ENCODE measurements at regions of chr12 and their contacts with region 1.

Region 1: DNA sequence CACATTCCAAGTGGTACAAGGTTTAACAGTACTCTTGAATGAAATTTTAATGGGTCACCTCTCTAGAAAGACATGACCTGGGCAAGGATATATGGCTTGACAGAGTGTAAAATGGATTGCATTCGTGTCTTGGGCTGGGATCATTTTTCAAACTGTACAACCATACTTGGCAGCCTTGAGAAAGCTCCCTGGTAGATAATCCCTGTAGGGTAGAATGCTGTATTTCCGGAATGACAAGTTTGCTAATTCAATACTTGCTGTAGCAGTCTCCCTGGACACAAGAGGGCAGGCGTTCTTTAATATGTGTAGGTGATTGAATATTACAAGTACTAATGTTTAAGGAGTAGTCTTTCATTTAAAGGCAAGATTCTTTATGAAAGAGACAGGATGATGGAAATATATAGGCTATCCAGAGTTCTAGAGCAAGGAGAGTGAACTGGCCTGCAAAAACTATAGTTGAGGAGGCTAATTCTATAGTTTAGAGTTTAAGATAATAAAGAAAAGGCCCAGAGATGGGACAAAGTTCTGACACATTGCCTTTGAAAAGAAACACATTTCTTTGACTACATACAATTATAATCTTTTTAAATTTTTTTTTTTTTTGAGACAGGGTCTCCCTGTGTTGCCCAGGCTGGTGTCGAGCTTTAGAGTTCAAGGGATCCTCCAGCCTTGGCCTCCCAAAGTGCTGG is 53.4 kb downstream of the PLBD1 start:
- DNase-seq: peak; percentile 75

Region 2: DNA sequence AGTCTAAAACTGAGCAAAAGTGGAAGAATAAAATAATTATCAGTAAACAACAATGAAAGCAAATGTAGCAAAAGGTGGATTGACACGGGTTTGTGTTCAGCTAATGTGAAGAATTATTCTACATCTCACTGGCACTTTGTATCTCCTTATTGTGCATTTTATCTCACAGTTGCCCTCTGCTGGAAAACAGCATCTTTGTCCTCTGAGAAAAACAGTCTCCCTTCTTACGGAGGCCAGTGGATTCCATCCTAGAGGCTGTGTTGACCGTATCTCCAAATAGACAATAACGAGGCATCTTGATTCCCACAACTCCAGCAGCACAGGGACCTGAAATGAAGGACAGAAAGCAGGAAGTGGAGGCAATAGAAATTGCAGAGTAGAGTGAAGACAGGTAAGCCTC is 104.7 kb after region 1 on chr12:
- in situ Hi-C with region 1: loop called (anchors 25 kb)
- DNase-seq: peak; percentile 65

Region 3: DNA sequence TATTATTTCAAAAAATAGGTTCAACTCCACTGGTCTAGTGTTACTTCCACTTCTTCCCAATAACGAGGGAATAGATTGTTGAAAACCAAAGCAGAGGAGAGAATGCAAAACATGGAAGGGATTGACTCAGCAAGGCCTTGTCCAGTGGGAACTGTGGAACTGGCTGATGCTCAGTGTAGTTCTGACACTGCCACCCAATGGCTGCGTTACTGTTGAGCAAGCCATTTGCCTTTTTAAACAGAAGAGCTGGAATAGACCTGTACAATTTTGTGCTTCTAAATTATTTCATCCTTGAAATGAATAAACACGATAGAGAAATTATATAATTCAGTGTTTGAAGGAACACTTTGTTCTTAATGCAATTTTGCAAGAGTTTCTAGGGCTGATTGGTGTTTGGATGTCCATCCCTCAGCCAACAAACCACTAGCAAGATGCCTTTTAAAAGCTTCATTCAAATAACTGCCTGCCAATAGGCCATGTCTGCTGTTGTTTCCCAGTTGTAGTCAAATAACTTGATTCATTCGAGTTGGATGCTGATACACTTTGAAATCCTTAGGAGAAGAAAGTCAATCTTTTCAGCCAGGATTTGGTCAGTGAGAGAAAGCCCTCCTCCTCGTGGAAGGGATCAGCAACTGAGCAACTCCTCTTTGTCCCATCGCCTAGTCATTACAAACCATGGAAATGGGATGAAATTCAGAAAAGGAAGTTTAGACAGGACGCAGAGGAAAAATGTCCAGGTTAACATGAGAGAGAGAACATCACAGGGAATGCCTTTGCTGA is 378.6 kb after region 1 on chr12:
- in situ Hi-C with region 1: no loop called
- DNase-seq: peak; percentile 84

Region 4: DNA sequence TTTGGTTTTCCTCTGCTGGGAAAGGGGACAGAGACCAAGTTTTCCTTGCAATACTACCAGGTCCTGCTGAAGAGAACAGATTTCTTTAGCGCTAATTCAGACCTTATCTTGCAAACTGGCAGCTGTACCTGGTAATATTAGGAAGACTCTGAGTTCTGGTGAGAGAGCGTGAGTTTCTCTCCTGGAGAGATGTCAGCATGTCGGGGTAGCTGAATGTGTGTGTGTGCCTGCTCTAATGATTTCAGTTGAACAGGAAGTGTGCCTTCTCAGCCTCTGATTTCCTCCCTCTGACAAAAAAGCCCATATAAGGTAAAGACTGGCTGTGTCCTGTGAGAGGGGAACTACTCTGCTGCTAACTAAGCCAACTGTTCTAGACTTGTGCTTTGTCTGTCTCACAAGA is 434.4 kb after region 1 on chr12:
- in situ Hi-C with region 1: no loop called
- DNase-seq: peak; percentile 38

Measured in SK-MEL-5 (cell line).